Posterior vena cava (tissue), 2 donors: ENCODE measurements at regions of chr1 and their contacts with region 1.

Region 1: DNA sequence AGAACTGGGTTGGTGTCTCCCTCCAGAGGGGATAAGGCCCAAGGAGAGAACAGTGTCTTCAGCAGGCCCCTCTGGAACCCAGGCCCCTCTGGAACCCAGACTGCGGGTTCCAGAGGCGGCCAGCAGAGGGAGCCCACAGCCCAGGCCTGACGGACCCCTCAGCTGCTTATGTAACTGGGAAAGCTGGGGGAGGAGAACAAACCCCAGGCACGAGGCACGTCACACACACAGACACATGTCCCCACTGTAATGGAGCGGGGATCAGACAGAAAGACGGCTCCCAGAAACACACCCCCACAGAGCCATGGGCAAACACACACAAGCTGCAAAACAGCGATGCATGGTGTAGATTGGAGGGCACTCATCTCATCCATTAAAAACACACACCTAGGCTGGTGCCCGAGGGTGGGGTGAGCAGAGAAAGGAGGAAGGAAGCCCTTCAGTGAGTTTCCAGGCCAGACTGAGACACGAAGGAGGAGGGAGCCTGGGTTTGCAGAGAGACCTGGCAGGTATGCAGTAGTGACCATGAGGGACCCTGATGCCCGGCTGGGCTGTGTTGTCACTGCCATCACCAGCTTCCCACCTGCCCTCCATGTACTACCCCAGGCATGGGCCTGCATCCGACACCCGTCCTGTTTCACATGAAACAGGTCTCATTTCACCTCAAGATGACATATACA is 2.8 kb upstream of the IGSF8 start:
- DNase-seq: peak; percentile 92

Region 2: GRCh38 chr1:160046494-160047110 is 54.6 kb before region 1 on chr1:
- intact Hi-C with region 1: no loop called
- DNase-seq: no peak

Region 3: DNA sequence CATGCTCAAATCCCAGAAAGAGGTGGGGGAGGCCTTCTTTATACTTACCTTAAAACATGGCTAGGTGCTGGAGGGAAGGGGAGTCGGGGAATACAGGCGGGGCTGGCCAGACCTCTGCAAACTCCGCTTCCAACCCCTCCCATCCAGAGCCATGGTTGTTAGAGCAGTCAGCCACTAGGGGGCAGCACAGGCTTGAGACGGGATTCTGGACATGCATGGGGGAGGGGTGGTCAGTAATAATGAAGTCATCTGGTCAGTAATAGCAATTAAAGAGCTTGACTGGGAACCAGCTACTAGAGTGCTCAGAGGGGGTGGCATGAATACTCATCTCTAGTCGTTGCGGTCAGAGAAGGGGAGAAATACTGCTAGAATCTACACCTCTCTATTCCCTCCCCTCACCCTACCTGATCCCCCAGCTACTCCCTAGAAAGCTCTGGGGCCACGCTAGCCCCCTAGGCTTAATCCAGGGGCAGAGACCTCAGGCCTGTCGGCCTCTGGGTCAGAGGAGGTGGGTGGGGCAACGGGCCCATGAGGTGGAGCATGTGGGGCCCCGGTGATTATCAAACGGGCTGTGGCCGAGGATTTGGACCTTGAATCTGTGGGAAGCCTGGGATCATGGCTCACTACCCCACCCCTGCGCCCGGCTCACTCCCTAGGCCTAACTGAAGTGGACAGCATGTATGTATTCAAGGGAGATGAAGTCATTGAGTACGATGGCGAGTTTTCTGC is 92.1 kb after region 1 on chr1:
- intact Hi-C with region 1: loop called (anchors 10 kb)
- DNase-seq: peak; percentile 96

Region 4: GRCh38 chr1:160244209-160244608 is 143.0 kb after region 1 on chr1:
- intact Hi-C with region 1: loop called in 1 of 2 experiments (anchors 10 kb)
- DNase-seq: no peak

Region 5: DNA sequence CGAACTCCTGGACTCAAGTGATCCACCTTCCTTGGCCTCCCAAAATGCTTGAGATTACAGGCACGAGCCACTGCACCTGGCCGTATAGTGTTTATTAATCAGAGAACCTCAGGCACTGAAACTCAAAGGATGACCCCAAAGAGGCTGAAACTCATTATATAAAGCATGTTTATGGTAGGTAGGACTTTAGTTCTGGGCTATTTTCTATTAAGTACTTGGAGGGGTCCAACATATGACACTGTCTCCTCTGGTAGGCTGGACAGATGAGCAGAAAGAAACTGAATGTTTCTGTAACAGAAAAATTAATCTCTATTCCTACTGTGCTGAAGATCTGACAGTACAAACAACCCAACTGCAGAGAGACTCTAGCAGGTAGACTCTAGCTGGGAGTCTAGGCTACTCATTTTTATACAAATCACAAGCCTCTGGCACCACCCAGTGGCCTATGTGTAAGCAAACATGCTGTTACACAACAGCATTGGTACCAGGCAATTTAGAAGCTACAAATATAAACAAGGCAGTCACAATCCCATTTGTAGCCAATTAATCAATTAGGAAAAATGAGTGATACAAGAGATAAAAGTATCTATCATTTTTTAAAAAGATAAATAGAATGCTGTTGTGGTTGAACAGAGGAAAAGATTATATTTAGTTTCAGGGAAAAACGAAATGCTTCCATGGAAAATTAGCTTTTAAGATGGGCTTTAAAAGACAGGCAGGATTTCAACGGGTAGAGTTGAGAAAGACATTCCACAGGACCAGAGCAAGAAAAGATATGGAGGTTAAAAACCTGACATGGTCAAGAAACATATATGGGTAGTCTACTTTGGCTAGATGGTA is 150.7 kb after region 1 on chr1:
- intact Hi-C with region 1: loop called (anchors 10 kb)
- DNase-seq: no peak

Region 6: GRCh38 chr1:160277330-160277729 is 176.2 kb after region 1 on chr1:
- intact Hi-C with region 1: no loop called
- DNase-seq: no peak

Region 7: GRCh38 chr1:160376525-160377131 is 275.5 kb after region 1 on chr1:
- intact Hi-C with region 1: no loop called
- DNase-seq: no peak

Region 8: GRCh38 chr1:160471253-160471652 is 370.1 kb after region 1 on chr1:
- intact Hi-C with region 1: no loop called
- DNase-seq: no peak